ENCODE measurements at regions of chr10 and their contacts with region 1.

Region 1: DNA sequence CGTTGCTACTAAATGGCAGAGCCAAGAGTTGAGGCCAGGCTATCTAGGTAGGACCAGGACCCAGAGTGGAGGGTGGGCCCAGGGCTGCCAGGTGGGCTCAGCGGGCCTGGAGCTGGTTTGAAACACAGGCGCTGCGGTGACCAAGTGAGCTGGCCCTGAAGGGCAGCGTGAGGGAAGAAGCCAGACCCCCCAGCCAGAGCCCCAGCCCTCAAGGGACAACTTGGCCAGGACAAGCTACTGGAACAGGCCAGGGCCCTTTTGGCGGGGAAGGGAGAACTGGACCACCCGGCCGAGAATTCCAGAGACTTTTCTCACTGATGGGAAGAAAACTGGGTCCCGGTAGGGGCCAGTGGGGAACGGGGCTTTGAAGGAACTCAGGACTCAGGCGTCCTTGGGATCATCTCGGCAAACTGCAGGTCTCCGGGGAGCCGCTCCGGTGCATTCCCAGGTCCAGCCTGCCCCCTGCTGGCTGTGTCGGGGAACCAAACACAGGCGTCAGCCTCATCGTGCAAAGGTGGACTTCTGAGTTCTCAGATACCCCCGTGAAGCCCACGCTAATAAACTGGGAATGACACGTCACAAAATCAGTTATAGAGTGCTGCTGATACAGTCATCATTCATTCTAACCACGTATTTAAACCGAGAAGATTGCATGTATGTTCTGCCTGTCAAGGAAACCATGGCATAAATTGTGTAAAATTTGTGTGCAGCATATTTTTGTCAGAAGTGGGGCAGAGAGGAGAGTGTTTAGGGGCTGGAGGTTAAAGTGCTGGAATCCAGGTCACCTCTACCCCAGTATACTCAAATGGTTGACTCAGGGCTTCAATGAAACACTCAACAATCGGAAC is 76.0 kb upstream of the CPXM2 start:
- DNase-seq: peak; percentile 76
- H3K4me3 ChIP-seq: no peak overlapping the region
- H3K27ac ChIP-seq: no peak overlapping the region
- H3K4me1 ChIP-seq: peaks cover 10% of the 10 kb centered on the region; the same call in 1 of the 2 replicates
- H3K27me3 ChIP-seq: peaks cover 18% of the 10 kb centered on the region

Region 2: GRCh38 chr10:123043409-123043925 is 924.2 kb before region 1 on chr10:
- in situ Hi-C with region 1: loop called (anchors 25 kb)
- DNase-seq: peak; percentile 76
- H3K4me3 ChIP-seq: no peak overlapping the region
- H3K27ac ChIP-seq: no peak overlapping the region
- H3K4me1 ChIP-seq: no peaks in the 10 kb centered on the region
- H3K27me3 ChIP-seq: no peaks in the 10 kb centered on the region

Region 3: GRCh38 chr10:123132576-123133477 is 834.8 kb before region 1 on chr10:
- in situ Hi-C with region 1: loop called (anchors 25 kb)
- DNase-seq: peak; percentile 86
- H3K4me3 ChIP-seq: peak overlapping the region; percentile 63
- H3K27ac ChIP-seq: no peak overlapping the region
- H3K4me1 ChIP-seq: no peaks in the 10 kb centered on the region
- H3K27me3 ChIP-seq: peaks cover 73% of the 10 kb centered on the region

Region 4: DNA sequence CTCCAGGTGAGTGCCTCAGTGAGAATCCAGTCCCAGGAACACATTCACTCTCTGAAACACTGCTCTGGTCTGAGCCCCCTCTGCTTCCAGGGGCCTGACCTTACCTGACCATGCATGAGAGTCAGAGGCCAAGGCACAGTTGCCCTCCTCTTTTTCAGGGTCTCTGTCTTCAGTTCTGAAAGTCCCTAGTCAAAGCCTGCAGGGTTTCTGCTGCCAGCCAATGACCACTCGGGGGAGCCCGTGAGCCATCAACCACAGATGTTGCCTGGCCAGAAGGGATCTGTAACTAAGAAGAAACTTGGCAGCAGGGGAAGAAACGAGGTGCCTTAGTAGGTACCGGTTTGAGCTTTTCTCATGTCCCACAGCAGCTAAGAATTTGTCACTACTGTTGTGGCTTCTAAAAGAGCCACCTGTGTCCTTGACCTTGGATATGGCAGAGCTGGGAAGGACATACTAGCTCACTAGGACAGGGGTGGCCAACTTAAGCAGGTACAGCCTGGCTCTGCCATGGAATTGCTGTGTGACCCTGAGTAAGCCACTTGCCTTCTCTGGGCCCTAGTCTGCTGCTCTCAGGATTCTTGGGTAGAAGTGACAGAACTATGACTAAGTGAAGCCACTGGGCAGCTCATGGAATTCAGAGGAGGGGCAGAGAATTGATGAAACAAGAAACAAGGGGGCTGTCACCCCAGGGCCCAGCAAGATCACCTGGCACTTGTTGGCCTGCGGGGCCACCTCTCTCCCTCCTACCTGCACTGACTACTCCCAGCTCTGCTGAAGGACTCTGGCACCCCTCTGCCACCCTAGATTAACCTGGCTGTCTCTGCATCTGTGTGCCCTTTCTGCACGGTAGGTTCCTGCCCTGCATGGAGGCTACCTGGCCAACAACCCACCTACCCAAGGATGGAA is 385.3 kb before region 1 on chr10:
- in situ Hi-C with region 1: loop called (anchors 5 kb)
- DNase-seq: peak; percentile 86
- H3K4me3 ChIP-seq: no peak overlapping the region
- H3K27ac ChIP-seq: no peak overlapping the region
- H3K4me1 ChIP-seq: peaks cover 7% of the 10 kb centered on the region; the same call in 1 of the 2 replicates
- H3K27me3 ChIP-seq: no peaks in the 10 kb centered on the region; the same call in none of the 2 replicates

Measured in GM23248 (cell line).